Naive thymus-derived CD4-positive, alpha-beta T cell (primary cell): ENCODE measurements at regions of chr6 and their contacts with region 1.

Region 1: GRCh38 chr6:149648148-149649145 is at the start of gene KATNA1:
- DNase-seq: peak; percentile 69 to 95 (median 81)
- ATAC-seq: peak; percentile 96
- H3K4me3 ChIP-seq: peak within 1 kb of the TSS; percentile 91
- H3K4me3 Mint-ChIP-seq: peak within 1 kb of the TSS; percentile 83 to 96 (median 91)
- H3K27ac ChIP-seq: peak within 1 kb of the TSS; percentile 82
- H3K27ac Mint-ChIP-seq: peak within 1 kb of the TSS; percentile 82 to 95 (median 90)
- H3K4me1 ChIP-seq: peaks cover 7 to 17% of the 10 kb centered on the region in 2 donors
- H3K4me1 Mint-ChIP-seq: peaks cover 2 to 41% (median 33%) of the 10 kb centered on the region in 7 donors
- H3K27me3 ChIP-seq: no peaks in the 10 kb centered on the region
- H3K27me3 Mint-ChIP-seq: no peaks in the 10 kb centered on the region
- total RNA-seq, gene KATNA1: 14.1 to 22.6 (median 16.7) TPM

Region 2: DNA sequence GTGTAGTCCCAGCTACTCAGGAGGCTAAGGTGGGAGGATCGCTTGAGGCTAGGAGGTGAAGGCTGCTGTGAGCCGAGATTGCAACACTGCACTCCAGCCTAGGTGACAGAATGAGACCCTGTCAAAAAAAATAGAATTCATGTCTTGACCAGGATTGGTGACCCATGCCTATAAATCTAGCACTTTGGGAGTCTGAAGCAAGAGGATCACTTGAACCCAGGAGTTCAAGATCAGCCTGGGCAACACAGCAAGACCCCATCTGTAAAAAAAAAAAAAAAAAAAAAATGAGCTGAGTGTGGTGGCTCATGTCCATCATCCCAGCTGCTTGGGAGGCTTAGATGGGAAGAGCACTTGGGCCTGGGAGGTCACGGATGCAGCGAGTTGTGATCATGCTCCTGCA is 47.9 kb before region 1 on chr6:
- CTCF ChIA-PET with region 1: no interaction called
- POLR2A ChIA-PET with region 1: no interaction called
- intact Hi-C with region 1: loop called in 1 of 2 experiments (anchors 5 kb)
- DNase-seq: no peak
- ATAC-seq: no peak
- H3K4me3 ChIP-seq: no peak overlapping the region
- H3K4me3 Mint-ChIP-seq: no peak overlapping the region
- H3K27ac ChIP-seq: no peak overlapping the region
- H3K27ac Mint-ChIP-seq: peak overlapping the region in 1 of 9 donors; percentile 8
- H3K4me1 ChIP-seq: no peaks in the 10 kb centered on the region
- H3K4me1 Mint-ChIP-seq: no peaks in the 10 kb centered on the region
- H3K27me3 ChIP-seq: no peaks in the 10 kb centered on the region
- H3K27me3 Mint-ChIP-seq: no peaks in the 10 kb centered on the region

Region 3: GRCh38 chr6:149660028-149660427 is 11.6 kb after region 1 on chr6:
- CTCF ChIA-PET with region 1: no interaction called
- POLR2A ChIA-PET with region 1: interaction called, 3 read pairs
- intact Hi-C with region 1: loop called in 1 of 2 experiments (anchors 2 kb)
- DNase-seq: no peak
- ATAC-seq: no peak
- H3K4me3 ChIP-seq: no peak overlapping the region
- H3K4me3 Mint-ChIP-seq: peak overlapping the region in 1 of 10 donors; percentile 35
- H3K27ac ChIP-seq: no peak overlapping the region
- H3K27ac Mint-ChIP-seq: peak overlapping the region in 2 of 9 donors; percentile 6 to 23
- H3K4me1 ChIP-seq: no peaks in the 10 kb centered on the region
- H3K4me1 Mint-ChIP-seq: peaks cover 0 to 14% (median 0%) of the 10 kb centered on the region in 7 donors
- H3K27me3 ChIP-seq: no peaks in the 10 kb centered on the region
- H3K27me3 Mint-ChIP-seq: no peaks in the 10 kb centered on the region

Region 4: GRCh38 chr6:149717588-149718458 is 69.4 kb after region 1 on chr6 and contains the start of gene LATS1:
- CTCF ChIA-PET with region 1: no interaction called
- POLR2A ChIA-PET with region 1: no interaction called
- intact Hi-C with region 1: loop called (anchors 1 kb)
- DNase-seq: peak; percentile 76 to 96 (median 91)
- ATAC-seq: peak; percentile 96
- H3K4me3 ChIP-seq: peak within 1 kb of the TSS; percentile 72
- H3K4me3 Mint-ChIP-seq: peak within 1 kb of the TSS; percentile 89 to 99 (median 94)
- H3K27ac ChIP-seq: peak within 1 kb of the TSS; percentile 97
- H3K27ac Mint-ChIP-seq: peak within 1 kb of the TSS; percentile 95 to 99 (median 97)
- H3K4me1 ChIP-seq: peaks cover 11 to 19% of the 10 kb centered on the region in 2 donors
- H3K4me1 Mint-ChIP-seq: peaks cover 18 to 51% (median 44%) of the 10 kb centered on the region in 7 donors
- H3K27me3 ChIP-seq: no peaks in the 10 kb centered on the region
- H3K27me3 Mint-ChIP-seq: no peaks in the 10 kb centered on the region
- total RNA-seq, gene LATS1: 33.3 to 49.5 (median 44.6) TPM